ENCODE measurements at regions of chr20 and their contacts with region 1.

Region 1: DNA sequence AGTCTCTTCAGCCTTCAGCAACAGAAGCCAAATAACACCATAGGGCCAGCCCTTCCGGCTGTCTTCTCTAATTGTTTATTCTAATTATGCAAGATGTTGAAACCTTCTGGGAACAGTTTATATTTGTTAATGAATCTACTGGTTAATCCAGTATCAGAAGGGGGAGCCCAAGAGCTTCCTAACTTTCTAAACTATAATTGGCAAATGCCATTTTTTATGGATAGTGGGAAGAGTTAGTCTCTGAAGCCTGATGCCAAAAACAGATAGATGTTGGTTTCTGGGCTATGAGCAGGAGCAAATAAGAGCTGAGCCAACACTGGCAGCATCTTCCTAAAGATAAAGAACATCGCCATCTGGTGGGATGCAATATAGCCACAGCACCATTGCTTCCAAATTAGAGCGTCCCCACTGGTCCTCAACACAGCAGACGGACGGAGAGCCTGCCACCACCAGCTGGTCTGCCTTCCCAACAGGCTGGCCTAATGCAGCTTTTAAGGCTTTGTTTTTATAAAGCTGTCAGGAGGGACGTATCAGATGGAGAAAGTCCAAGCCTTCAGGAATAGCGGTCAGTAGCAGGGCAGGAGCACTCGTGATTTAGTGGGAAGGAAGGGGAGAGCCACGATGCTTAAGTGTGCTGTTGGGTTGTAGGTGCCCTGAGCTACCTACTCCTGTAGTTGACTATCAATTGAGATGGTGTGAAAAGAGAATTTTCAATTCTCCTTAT is 118.8 kb downstream of the RALGAPA2 start:
- DNase-seq: peak; percentile 19
- H3K4me3 Mint-ChIP-seq: no peak overlapping the region
- H3K27ac Mint-ChIP-seq: no peak overlapping the region
- H3K4me1 Mint-ChIP-seq: no peaks in the 10 kb centered on the region
- H3K27me3 Mint-ChIP-seq: no peaks in the 10 kb centered on the region

Region 2: GRCh38 chr20:20184149-20184548 is 409.5 kb before region 1 on chr20:
- CTCF ChIA-PET with region 1: interaction called, 10 read pairs
- POLR2A ChIA-PET with region 1: no interaction called
- DNase-seq: no peak
- H3K4me3 Mint-ChIP-seq: no peak overlapping the region
- H3K27ac Mint-ChIP-seq: no peak overlapping the region
- H3K4me1 Mint-ChIP-seq: no peaks in the 10 kb centered on the region
- H3K27me3 Mint-ChIP-seq: peaks cover 3% of the 10 kb centered on the region

Region 3: DNA sequence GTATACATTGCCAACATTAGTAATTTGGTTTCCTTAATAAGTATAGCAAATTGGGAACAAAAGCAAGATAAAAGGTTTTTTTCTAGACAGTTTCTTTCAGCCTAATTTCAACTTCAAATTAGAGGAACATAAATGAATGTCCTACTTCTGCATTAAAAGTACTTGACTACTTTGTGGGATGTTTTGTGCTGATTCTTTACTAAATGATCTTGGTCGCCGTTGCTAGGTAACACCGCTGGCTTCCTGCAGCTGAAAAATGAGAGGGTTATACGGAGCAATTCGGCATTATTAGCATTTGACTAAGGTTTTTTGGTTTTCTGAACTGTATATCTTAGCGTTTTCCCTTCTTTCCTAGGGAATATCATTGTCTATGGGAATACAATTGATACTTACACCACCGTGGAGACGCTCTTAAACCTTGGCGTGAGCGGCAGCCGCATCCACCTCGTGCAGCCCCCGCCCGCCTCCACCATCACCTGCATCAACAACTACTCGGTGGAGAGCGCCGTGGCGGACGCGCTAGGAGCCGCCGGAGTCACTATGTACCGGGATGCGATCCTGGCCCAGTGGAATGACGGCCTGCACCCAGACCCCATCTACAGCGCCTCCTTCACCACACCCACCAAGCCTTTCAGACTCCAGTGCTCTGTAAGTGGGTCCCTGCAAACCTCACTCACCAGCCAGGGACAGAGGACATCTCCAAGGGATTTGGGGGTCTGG is 316.6 kb before region 1 on chr20:
- CTCF ChIA-PET with region 1: no interaction called
- POLR2A ChIA-PET with region 1: no interaction called
- DNase-seq: no peak
- H3K4me3 Mint-ChIP-seq: no peak overlapping the region
- H3K27ac Mint-ChIP-seq: no peak overlapping the region
- H3K4me1 Mint-ChIP-seq: no peaks in the 10 kb centered on the region
- H3K27me3 Mint-ChIP-seq: peaks cover 15% of the 10 kb centered on the region

Region 4: DNA sequence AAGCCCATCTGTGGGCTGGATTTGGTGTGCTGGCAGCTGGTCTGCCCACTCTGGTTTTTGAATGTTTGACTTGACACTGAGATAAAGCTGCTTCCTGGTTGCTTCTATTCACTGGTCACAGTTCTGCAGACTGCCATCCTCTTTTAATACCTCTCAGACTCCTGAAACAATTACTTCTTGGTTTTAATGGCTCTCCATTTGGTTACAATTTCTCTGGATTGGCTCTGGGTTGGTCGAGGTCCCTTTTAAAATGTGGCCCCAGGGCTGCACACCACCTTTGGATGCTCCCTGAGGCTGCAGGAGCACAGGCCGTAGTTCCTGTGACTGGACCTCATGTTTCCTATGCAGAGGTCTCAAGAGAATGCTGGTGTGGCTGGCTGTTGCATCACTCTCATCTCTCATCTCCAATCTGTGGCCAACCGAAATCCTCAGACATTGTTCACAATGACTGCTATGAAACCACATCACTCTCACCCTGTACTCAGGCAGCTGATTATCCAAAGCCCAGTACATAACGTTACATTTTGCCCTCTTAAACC is 127.2 kb before region 1 on chr20:
- CTCF ChIA-PET with region 1: no interaction called
- POLR2A ChIA-PET with region 1: no interaction called
- DNase-seq: peak; percentile 21
- H3K4me3 Mint-ChIP-seq: no peak overlapping the region
- H3K27ac Mint-ChIP-seq: no peak overlapping the region
- H3K4me1 Mint-ChIP-seq: peaks cover 8% of the 10 kb centered on the region
- H3K27me3 Mint-ChIP-seq: peaks cover 10% of the 10 kb centered on the region

Region 5: DNA sequence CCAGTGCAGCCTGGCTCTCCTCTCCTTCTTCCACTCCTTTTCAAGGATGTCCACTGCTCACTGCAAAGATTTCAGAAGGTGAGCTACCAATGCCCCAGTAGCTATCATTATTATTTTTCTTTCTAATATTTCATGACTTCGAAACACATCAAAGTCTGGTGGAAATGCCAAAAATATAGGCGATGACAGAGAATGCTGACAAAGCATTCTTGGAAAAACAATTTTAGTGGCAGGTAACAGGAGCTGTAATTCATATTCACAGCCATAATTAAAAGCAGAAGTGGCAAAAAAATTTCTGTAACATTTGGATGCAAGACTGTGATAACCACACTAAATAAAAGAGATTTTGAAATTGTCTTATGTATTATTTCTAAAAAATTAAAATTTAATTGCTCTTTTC is 14.8 kb before region 1 on chr20:
- CTCF ChIA-PET with region 1: interaction called, 10 read pairs
- POLR2A ChIA-PET with region 1: no interaction called
- DNase-seq: no peak
- H3K4me3 Mint-ChIP-seq: no peak overlapping the region
- H3K27ac Mint-ChIP-seq: no peak overlapping the region
- H3K4me1 Mint-ChIP-seq: peaks cover 4% of the 10 kb centered on the region
- H3K27me3 Mint-ChIP-seq: no peaks in the 10 kb centered on the region

Measured in activated CD4-positive, alpha-beta memory T cell treated with anti-CD3 and anti-CD28 coated beads, Interleukin-2, amount 10 ng/mL, durations not matched to agents 7 days and 5 days (primary cell).